ENCODE measurements at regions of chr16 and their contacts with region 1.

Region 1: DNA sequence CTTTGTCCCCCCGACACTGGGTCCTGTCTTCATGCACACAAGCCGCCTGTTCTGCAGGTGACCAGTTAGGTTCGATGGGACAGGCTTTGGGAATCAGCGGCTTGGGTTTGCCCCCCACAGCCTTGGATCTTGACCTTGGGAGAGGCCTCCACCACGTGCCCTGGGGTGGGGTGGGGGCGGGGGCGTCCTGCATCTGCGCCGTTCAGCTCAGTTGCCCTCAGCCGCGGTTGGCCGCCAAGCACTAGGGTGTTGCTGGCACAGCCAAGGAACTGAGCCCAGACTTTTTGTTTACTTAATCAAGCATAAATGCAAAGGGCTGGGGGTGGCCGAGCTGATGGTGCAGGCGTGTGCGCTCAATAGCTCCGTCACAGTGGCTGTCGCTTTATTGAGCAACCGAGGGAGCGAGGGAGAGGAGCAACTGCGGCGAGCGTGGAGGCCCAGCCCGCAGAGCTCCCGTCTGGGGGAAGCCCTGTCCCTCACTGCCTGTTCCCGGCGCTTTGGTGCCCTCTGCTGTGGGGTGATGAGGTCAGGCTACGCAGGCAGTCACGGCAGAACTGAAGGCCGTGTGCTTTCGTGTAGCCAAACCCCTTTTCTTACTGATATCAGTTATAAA is 33.9 kb downstream of the JPH3 start:
- DNase-seq: peak; percentile 87 to 90
- H3K4me3 ChIP-seq: peak overlapping the region; percentile 28
- H3K4me3 Mint-ChIP-seq: peak overlapping the region; percentile 66
- H3K27ac Mint-ChIP-seq: no peak overlapping the region
- H3K4me1 ChIP-seq: peaks cover 7% of the 10 kb centered on the region; the same call in 1 of the 2 replicates
- H3K4me1 Mint-ChIP-seq: peaks cover 9% of the 10 kb centered on the region
- H3K27me3 ChIP-seq: no peaks in the 10 kb centered on the region
- H3K27me3 Mint-ChIP-seq: peaks cover 27% of the 10 kb centered on the region
- CTCF ChIP-seq: peak; percentile 91 to 93

Region 2: GRCh38 chr16:87387942-87388817 is 248.0 kb before region 1 on chr16:
- CTCF ChIA-PET with region 1: interaction called, 9 read pairs
- POLR2A ChIA-PET with region 1: no interaction called
- intact Hi-C with region 1: loop called (anchors 5 kb)
- DNase-seq: peak; percentile 98 to 99
- H3K4me3 ChIP-seq: peak overlapping the region; percentile 21
- H3K4me3 Mint-ChIP-seq: peak overlapping the region; percentile 75
- H3K27ac Mint-ChIP-seq: peak overlapping the region; percentile 87
- H3K4me1 ChIP-seq: peaks cover 21% of the 10 kb centered on the region; the same call in 1 of the 2 replicates
- H3K4me1 Mint-ChIP-seq: peaks cover 28% of the 10 kb centered on the region
- H3K27me3 ChIP-seq: no peaks in the 10 kb centered on the region
- H3K27me3 Mint-ChIP-seq: peaks cover 2% of the 10 kb centered on the region
- CTCF ChIP-seq: no peak

Region 3: GRCh38 chr16:87416826-87417527 is 219.2 kb before region 1 on chr16:
- CTCF ChIA-PET with region 1: interaction called, 15 read pairs
- POLR2A ChIA-PET with region 1: no interaction called
- intact Hi-C with region 1: loop called (anchors 5 kb)
- DNase-seq: no peak
- H3K4me3 ChIP-seq: no peak overlapping the region
- H3K4me3 Mint-ChIP-seq: no peak overlapping the region
- H3K27ac Mint-ChIP-seq: no peak overlapping the region
- H3K4me1 ChIP-seq: peaks cover 16% of the 10 kb centered on the region
- H3K4me1 Mint-ChIP-seq: peaks cover 12% of the 10 kb centered on the region
- H3K27me3 ChIP-seq: no peaks in the 10 kb centered on the region
- H3K27me3 Mint-ChIP-seq: no peaks in the 10 kb centered on the region
- CTCF ChIP-seq: peak; percentile 46 to 63

Region 4: GRCh38 chr16:87571136-87571867 is 64.9 kb before region 1 on chr16:
- CTCF ChIA-PET with region 1: interaction called, 45 read pairs
- POLR2A ChIA-PET with region 1: no interaction called
- intact Hi-C with region 1: no loop called
- DNase-seq: peak; percentile 80 to 83
- H3K4me3 ChIP-seq: no peak overlapping the region
- H3K4me3 Mint-ChIP-seq: peak overlapping the region; percentile 19
- H3K27ac Mint-ChIP-seq: no peak overlapping the region
- H3K4me1 ChIP-seq: peaks cover 9% of the 10 kb centered on the region; the same call in 1 of the 2 replicates
- H3K4me1 Mint-ChIP-seq: no peaks in the 10 kb centered on the region
- H3K27me3 ChIP-seq: no peaks in the 10 kb centered on the region
- H3K27me3 Mint-ChIP-seq: no peaks in the 10 kb centered on the region
- CTCF ChIP-seq: peak; percentile 44 to 85

Region 5: DNA sequence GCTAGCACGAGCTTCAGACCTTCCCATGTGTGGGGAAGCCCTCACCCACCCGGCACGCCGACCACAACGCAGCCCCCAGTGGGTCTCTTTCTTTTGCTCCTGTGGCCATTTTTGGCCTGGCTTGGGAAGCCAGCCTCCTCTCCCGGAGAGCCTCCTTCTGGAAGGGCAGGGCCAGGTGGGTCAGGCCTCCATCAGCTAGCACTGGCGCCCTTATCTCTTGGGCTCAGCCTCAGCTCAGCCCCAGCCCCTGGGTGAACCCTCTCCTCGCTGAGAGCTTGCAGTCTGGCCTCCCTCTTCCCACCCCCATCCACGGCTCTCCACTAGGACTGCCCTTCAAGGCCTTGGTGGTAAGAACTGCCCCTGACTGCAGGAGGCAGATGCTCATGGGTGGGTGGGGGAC is 48.5 kb before region 1 on chr16:
- CTCF ChIA-PET with region 1: interaction called, 187 read pairs
- POLR2A ChIA-PET with region 1: interaction called, 10 read pairs
- intact Hi-C with region 1: loop called (anchors 1 kb)
- DNase-seq: no peak
- H3K4me3 ChIP-seq: no peak overlapping the region
- H3K4me3 Mint-ChIP-seq: no peak overlapping the region
- H3K27ac Mint-ChIP-seq: no peak overlapping the region
- H3K4me1 ChIP-seq: peaks cover 4% of the 10 kb centered on the region
- H3K4me1 Mint-ChIP-seq: no peaks in the 10 kb centered on the region
- H3K27me3 ChIP-seq: no peaks in the 10 kb centered on the region; the same call in none of the 2 replicates
- H3K27me3 Mint-ChIP-seq: peaks cover 20% of the 10 kb centered on the region
- CTCF ChIP-seq: no peak

Region 6: GRCh38 chr16:87778830-87779579 is 142.8 kb after region 1 on chr16:
- CTCF ChIA-PET with region 1: no interaction called
- POLR2A ChIA-PET with region 1: no interaction called
- intact Hi-C with region 1: no loop called
- DNase-seq: peak; percentile 92 to 94
- H3K4me3 ChIP-seq: no peak overlapping the region
- H3K4me3 Mint-ChIP-seq: peak overlapping the region; percentile 22
- H3K27ac Mint-ChIP-seq: peak overlapping the region; percentile 99
- H3K4me1 ChIP-seq: peaks cover 34% of the 10 kb centered on the region
- H3K4me1 Mint-ChIP-seq: peaks cover 21% of the 10 kb centered on the region
- H3K27me3 ChIP-seq: no peaks in the 10 kb centered on the region
- H3K27me3 Mint-ChIP-seq: no peaks in the 10 kb centered on the region
- CTCF ChIP-seq: peak; percentile 86 to 95

Measured in Caco-2 (cell line).